ENCODE measurements at regions of chr9 and their contacts with region 1.

Region 1: DNA sequence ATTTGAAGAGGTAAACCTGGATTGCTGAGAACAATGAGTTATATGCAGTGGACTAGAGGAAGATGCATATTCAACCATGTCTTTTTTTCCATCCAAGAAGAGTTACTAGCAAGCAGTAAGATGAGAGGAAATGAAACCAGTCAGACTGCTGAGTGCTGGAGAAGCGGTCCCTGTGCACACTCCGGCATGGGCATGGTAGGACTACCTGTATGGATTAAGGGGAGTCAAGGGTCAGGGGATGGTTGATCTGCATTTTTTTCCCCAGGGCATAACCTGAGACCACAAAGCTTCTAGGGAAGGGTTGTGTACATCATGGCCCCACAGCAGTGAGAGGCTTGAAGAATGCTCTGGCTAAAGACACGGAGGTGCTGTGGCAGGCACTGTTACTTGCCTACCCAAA is 76.6 kb upstream of the ZNF169 start:
- DNase-seq: no peak
- H3K4me3 ChIP-seq: no peak overlapping the region
- H3K27ac ChIP-seq: no peak overlapping the region
- H3K4me1 ChIP-seq: no peaks in the 10 kb centered on the region
- H3K27me3 ChIP-seq: no peaks in the 10 kb centered on the region
- CTCF ChIP-seq: no peak

Region 2: DNA sequence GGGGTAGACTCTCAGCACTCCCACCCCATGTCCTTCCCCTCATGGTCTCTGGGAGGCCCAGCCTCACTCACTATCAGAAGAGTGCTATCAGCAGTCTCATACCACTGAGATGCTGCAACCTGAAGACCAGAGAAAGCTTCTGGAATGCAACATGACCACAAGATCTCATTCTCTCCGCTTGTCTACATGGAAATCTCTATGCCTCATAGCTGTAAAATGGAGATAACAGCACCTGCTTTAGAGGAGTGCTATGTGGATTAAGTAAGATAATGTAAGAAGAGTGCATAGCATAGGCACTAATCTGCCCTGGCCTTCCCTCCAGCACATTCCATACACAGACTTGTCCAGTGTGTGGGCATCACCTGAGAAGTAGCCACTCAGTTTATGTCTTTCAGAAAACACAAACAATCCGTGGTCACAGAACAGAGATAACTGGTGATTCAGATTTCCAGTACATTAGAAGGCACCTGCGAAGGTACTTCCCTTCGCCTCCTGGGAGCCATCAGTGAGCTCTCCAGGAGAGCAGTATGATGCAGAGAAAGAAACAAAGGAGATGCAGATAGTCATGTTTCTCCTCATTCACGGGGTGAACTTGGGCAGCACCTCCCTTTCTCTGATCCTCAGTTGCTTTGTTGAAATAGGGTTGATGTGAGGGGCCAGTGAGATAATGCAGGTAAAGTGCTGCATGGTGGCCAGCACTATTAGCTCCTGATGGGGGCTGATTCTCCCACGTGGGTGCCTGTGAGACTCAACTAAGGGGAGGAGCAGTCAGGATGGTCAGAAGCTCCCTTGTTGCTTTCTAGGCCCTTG is 29.8 kb after region 1 on chr9:
- CTCF ChIA-PET with region 1: no interaction called
- POLR2A ChIA-PET with region 1: no interaction called
- intact Hi-C with region 1: no loop called
- DNase-seq: no peak
- H3K4me3 ChIP-seq: no peak overlapping the region
- H3K27ac ChIP-seq: no peak overlapping the region
- H3K4me1 ChIP-seq: peaks cover 12% of the 10 kb centered on the region
- H3K27me3 ChIP-seq: peaks cover 4% of the 10 kb centered on the region
- CTCF ChIP-seq: no peak

Region 3: DNA sequence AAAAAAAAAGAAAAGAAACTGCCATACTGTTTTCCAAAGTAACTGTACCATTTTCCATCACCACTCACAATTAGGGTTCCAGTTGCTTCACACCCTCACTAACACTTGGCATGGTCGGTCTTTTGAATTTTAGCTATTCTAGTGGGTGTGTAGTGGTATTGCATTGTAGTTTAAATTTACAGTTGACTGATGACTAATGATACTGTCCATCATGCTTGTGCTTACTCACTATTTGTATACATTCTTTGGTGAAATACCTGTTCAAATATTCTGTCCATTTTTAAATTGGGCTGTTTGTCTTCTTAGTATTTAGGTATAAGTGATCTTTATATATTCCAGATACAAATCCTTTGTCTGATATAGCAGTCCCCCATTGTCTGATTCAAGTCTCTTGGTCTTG is 40.3 kb after region 1 on chr9:
- CTCF ChIA-PET with region 1: no interaction called
- POLR2A ChIA-PET with region 1: interaction called, 17 read pairs
- intact Hi-C with region 1: no loop called
- DNase-seq: no peak
- H3K4me3 ChIP-seq: no peak overlapping the region
- H3K27ac ChIP-seq: no peak overlapping the region
- H3K4me1 ChIP-seq: no peaks in the 10 kb centered on the region
- H3K27me3 ChIP-seq: no peaks in the 10 kb centered on the region
- CTCF ChIP-seq: no peak